ENCODE measurements at regions of chr1 and their contacts with region 1.

Region 1: DNA sequence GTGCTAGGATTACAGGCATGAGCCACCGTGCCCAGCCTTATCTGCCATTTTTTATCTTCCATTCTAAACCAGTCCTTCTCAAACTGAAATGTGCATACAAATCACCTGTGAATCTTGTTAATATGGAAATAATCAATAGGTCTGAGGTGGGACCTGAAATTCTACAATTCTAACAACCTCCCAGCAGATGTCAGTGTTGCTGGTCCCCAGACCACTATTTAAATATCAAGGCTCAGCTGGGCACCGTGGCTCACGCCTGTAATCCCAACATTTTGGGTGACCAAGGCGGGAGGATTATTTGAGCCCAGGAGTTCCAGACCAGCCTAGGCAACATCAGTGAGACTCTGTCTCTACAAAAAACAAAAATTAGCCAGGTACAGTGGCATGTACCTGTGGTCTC is 4.1 kb downstream of the UQCRHL start:
- DNase-seq: peak in 4 of 9 experiments; percentile 8 to 54 (median 28)
- ATAC-seq: peak; percentile 52
- H3K4me3 ChIP-seq: no peak overlapping the region
- H3K4me3 Mint-ChIP-seq: no peak overlapping the region
- H3K27ac ChIP-seq: no peak overlapping the region
- H3K27ac Mint-ChIP-seq: no peak overlapping the region
- H3K4me1 ChIP-seq: no peaks in the 10 kb centered on the region
- H3K4me1 Mint-ChIP-seq: no peaks in the 10 kb centered on the region
- H3K27me3 ChIP-seq: no peaks in the 10 kb centered on the region
- H3K27me3 Mint-ChIP-seq: peaks cover 16% of the 10 kb centered on the region
- CTCF ChIP-seq: peak; percentile 25

Region 2: DNA sequence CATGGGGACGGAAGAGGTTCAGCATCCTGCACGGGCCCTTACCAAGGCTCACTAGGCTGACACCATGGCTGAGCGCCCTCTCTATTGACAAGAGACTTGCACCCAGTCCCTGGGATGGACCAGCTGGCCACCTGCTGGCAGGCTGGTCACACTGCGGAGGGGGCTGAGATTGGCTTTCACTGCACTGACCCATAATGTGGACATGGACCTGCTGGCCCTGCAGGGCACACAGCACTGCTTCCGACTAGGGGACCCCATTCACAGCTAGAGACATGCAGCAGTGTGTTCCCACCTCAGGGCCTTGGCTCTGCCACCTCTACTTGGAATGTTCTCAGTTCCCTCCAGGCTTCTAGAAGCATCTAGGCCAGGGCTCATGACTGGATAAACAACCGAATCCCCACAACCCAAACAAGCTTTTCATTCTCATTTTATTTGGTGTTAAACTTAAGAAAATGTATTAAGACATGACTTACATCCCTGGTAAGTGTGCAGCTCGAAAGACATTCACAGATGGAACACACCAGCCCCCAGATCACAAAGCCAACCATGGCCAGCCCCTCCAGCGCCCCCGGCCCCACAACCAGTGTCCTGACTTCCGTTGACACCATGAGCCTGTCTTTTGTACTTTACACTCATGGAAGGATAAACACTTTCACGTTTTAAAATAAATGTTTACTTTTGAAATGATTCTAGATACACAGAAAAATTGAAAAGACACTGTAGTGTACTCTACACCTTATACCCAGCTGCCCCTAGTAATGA is 191.4 kb after region 1 on chr1:
- CTCF ChIA-PET with region 1: interaction called, 3 read pairs
- POLR2A ChIA-PET with region 1: no interaction called
- intact Hi-C with region 1: loop called in 1 of 2 experiments (anchors 1 kb)
- DNase-seq: peak in 6 of 9 experiments; percentile 19 to 63 (median 52)
- ATAC-seq: peak; percentile 77
- H3K4me3 ChIP-seq: no peak overlapping the region
- H3K4me3 Mint-ChIP-seq: no peak overlapping the region
- H3K27ac ChIP-seq: no peak overlapping the region
- H3K27ac Mint-ChIP-seq: no peak overlapping the region
- H3K4me1 ChIP-seq: no peaks in the 10 kb centered on the region
- H3K4me1 Mint-ChIP-seq: no peaks in the 10 kb centered on the region
- H3K27me3 ChIP-seq: no peaks in the 10 kb centered on the region
- H3K27me3 Mint-ChIP-seq: no peaks in the 10 kb centered on the region
- CTCF ChIP-seq: peak; percentile 37